ENCODE measurements at regions of chr7 and their contacts with region 1.

Region 1: GRCh38 chr7:21523779-21524178 is 19.1 kb upstream of the DNAH11 start:
- DNase-seq: no peak
- H3K4me3 ChIP-seq: no peak overlapping the region
- H3K27ac ChIP-seq: no peak overlapping the region
- H3K4me1 ChIP-seq: no peaks in the 10 kb centered on the region
- H3K27me3 ChIP-seq: no peaks in the 10 kb centered on the region
- CTCF ChIP-seq: no peak
- EP300 ChIP-seq: no peak
- POLR2A ChIP-seq: no peak

Region 2: GRCh38 chr7:21192657-21193056 is 331.1 kb before region 1 on chr7:
- intact Hi-C with region 1: no loop called
- DNase-seq: no peak
- H3K4me3 ChIP-seq: no peak overlapping the region
- H3K27ac ChIP-seq: no peak overlapping the region
- H3K4me1 ChIP-seq: no peaks in the 10 kb centered on the region
- H3K27me3 ChIP-seq: no peaks in the 10 kb centered on the region
- CTCF ChIP-seq: no peak
- EP300 ChIP-seq: no peak
- POLR2A ChIP-seq: no peak

Region 3: GRCh38 chr7:21542891-21543527 is 19.2 kb after region 1 on chr7 and contains the start of gene DNAH11:
- intact Hi-C with region 1: no loop called
- DNase-seq: peak in 3 of 5 donors; percentile 20 to 50 (median 22)
- H3K4me3 ChIP-seq: peak within 1 kb of the TSS; percentile 17
- H3K27ac ChIP-seq: no peak within 1 kb of the TSS
- H3K4me1 ChIP-seq: peaks cover 11% of the 10 kb centered on the region
- H3K27me3 ChIP-seq: no peaks in the 10 kb centered on the region
- CTCF ChIP-seq: no peak
- EP300 ChIP-seq: no peak
- POLR2A ChIP-seq: no peak
- total RNA-seq, gene DNAH11: 1.3 to 44.3 (median 3.2) TPM

Region 4: DNA sequence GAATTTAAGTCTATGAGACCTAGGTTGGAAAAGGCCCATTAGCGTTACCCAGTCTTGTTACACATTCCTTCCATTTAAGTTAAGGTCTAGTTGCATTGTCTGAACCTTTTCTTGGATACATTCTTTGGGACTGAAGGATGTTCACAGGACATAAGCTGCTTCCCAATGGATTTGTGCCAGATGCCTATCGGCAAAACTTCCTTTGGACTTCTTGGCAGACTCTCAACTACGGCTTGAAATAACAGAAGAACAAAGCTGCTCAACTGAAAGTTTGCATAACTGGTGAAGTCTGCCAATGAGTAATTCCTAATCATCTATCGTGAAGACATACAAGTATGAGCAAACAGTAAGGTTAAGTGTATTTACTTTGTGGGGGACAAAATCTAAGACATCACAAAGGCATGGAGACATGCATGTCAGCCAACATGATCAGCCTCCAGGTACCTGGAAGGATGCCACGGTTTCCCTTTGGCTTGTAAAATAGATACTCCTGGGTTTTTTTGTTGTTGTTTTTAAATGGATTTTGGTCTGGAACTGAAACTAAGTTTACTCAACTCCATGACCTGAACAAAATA is 1810.8 kb after region 1 on chr7:
- intact Hi-C with region 1: loop called in 1 of 4 experiments (anchors 5 kb)
- DNase-seq: peak in 3 of 5 donors; percentile 26 to 58 (median 39)
- H3K4me3 ChIP-seq: no peak overlapping the region
- H3K27ac ChIP-seq: peak overlapping the region; percentile 5 to 71
- H3K4me1 ChIP-seq: peaks cover 17% of the 10 kb centered on the region
- H3K27me3 ChIP-seq: no peaks in the 10 kb centered on the region
- CTCF ChIP-seq: no peak
- EP300 ChIP-seq: no peak
- POLR2A ChIP-seq: no peak